ENCODE measurements at regions of chr19 and their contacts with region 1.

Region 1: GRCh38 chr19:5665796-5666513 is 14.4 kb downstream of the MICOS13 start:
- DNase-seq: no peak

Region 2: GRCh38 chr19:5600797-5601196 is 65.2 kb before region 1 on chr19:
- in situ Hi-C with region 1: loop called (anchors 5 kb)
- DNase-seq: no peak

Region 3: DNA sequence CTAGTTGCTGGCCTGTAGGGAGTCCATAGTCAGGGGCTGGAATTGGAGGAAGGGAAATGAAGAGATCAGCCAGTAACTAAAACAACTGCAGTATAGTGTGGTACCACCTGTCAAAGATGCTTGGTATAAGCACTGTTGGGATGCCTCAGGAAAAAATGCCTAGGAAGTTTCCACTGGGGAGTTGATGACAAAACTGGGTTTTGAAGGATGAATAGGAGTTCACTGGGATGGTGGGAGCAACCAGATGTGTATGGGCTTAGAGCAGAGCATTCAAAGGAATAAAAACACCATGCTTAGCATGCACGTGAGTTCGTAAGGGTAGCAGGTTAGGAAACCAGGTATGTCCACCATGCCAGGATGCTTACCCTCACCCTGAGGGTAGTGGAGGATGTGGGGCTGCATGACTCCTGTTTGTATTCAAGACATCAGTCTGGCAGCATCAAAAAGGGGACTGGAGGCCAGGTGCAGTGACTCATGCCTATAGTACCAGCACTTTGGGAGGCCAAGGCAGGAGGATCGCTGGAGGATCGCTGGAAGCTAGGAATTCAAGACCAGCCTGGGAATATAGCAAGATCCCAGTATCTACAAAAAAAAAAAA is 61.6 kb after region 1 on chr19:
- in situ Hi-C with region 1: no loop called
- DNase-seq: no peak